ENCODE measurements at regions of chr5 and their contacts with region 1.

Region 1: DNA sequence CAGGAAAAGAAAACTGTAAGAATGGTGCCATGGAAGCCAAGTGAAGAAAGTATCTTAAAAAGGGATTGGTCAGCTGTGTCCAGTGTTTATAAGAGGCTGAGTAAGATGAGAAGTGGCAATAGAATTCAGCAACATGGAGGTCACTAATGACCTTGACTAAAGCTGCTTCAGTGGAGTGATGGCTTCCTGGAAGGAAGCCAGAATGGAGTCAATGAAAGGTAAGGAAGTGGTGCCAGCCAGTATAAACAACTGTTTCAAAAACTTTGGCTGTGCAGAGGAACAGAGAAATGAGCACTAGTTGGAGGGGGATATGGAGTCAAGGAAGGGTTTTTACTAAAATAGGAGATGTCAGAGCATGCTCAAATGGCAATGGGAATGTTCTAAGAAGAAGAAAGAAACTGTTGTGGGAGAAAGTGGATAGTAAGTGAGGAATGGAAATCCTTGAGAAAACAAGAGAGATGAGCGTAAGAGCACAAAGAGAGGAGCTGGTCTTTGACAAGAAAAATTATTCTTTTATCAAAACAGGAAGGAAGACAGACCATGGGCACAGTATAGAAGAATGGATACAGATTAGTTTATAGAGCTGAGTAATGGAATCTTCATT is 11.1 kb upstream of the NRG2 start:
- DNase-seq: no peak
- CTCF ChIP-seq: no peak

Region 2: GRCh38 chr5:140042643-140043500 is 11.3 kb before region 1 on chr5 and contains the start of gene NRG2:
- CTCF ChIA-PET with region 1: interaction called, 12 read pairs
- POLR2A ChIA-PET with region 1: no interaction called
- DNase-seq: peak; percentile 75
- CTCF ChIP-seq: peak; percentile 63

Region 3: DNA sequence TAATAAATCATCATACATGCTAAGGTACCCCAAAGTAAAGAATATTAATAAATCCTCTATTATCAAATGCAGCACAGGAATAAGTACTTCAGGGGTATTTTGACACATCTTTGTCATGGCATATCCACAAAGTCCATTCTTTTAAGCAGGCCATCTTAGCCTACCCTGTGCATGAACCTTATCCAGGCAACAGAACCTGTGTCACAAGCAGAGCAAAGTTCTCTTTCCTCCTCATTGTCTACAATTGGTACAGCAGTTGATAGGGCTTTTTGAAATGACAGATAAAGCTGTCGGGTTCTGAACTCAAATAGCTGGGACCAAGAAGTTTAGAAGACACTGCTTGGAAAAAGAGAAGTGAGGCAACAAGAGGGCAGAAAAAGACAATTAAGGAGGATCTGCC is 28.9 kb after region 1 on chr5:
- CTCF ChIA-PET with region 1: no interaction called
- POLR2A ChIA-PET with region 1: no interaction called
- DNase-seq: no peak
- CTCF ChIP-seq: no peak